CD4-positive, alpha-beta T cell (primary cell): ENCODE measurements at regions of chr13 and their contacts with region 1.

Region 1: DNA sequence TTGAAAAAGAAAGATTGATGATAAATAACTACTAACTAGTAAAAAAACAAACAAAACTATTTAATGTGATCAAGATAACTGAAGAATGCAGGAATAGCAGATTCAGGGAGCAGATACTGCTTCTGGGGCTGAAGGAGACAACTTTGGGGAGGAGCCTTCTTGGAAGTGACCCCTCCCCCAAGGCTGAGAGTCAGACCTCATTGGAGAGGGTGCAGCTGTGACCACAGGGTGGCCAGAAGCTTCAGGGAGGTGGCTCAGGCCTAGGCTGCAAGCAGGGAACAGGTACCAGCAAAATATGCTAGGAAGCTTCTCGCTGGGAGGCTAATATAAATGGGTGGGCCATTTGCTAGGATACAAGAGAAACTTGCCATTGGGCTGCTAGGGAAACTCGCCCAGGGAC is 149.9 kb downstream of the MYO16 start:
- DNase-seq: no peak
- ATAC-seq: no peak
- H3K4me3 ChIP-seq: no peak overlapping the region
- H3K4me3 Mint-ChIP-seq: no peak overlapping the region
- H3K27ac ChIP-seq: no peak overlapping the region
- H3K27ac Mint-ChIP-seq: no peak overlapping the region
- H3K4me1 ChIP-seq: no peaks in the 10 kb centered on the region
- H3K4me1 Mint-ChIP-seq: no peaks in the 10 kb centered on the region
- H3K27me3 ChIP-seq: no peaks in the 10 kb centered on the region
- H3K27me3 Mint-ChIP-seq: no peaks in the 10 kb centered on the region
- CTCF ChIP-seq: no peak

Region 2: GRCh38 chr13:107788464-107789165 is 990.7 kb before region 1 on chr13:
- CTCF ChIA-PET with region 1: no interaction called
- POLR2A ChIA-PET with region 1: no interaction called
- intact Hi-C with region 1: no loop called
- DNase-seq: no peak
- ATAC-seq: no peak
- H3K4me3 ChIP-seq: no peak overlapping the region
- H3K4me3 Mint-ChIP-seq: no peak overlapping the region
- H3K27ac ChIP-seq: no peak overlapping the region
- H3K27ac Mint-ChIP-seq: no peak overlapping the region
- H3K4me1 ChIP-seq: no peaks in the 10 kb centered on the region
- H3K4me1 Mint-ChIP-seq: no peaks in the 10 kb centered on the region
- H3K27me3 ChIP-seq: no peaks in the 10 kb centered on the region
- H3K27me3 Mint-ChIP-seq: no peaks in the 10 kb centered on the region
- CTCF ChIP-seq: no peak

Region 3: GRCh38 chr13:108807841-108808240 is 28.5 kb after region 1 on chr13:
- CTCF ChIA-PET with region 1: no interaction called
- POLR2A ChIA-PET with region 1: no interaction called
- intact Hi-C with region 1: loop called in 1 of 2 experiments (anchors 1 kb)
- DNase-seq: no peak
- ATAC-seq: no peak
- H3K4me3 ChIP-seq: no peak overlapping the region
- H3K4me3 Mint-ChIP-seq: no peak overlapping the region
- H3K27ac ChIP-seq: no peak overlapping the region
- H3K27ac Mint-ChIP-seq: no peak overlapping the region
- H3K4me1 ChIP-seq: no peaks in the 10 kb centered on the region
- H3K4me1 Mint-ChIP-seq: no peaks in the 10 kb centered on the region
- H3K27me3 ChIP-seq: no peaks in the 10 kb centered on the region
- H3K27me3 Mint-ChIP-seq: no peaks in the 10 kb centered on the region
- CTCF ChIP-seq: no peak